Heart right ventricle (tissue), 16 donors: ENCODE measurements at regions of chr10 and their contacts with region 1.

Region 1: GRCh38 chr10:111076191-111076681 is 593 bp upstream of the ADRA2A start:
- DNase-seq: peak; percentile 31 to 59
- ATAC-seq: peak; percentile 67 to 93 (median 85)
- H3K4me3 ChIP-seq: peak overlapping the region; percentile 35 to 62 (median 54)
- H3K27ac ChIP-seq: no peak overlapping the region
- H3K4me1 ChIP-seq: peaks cover 0 to 37% (median 31%) of the 10 kb centered on the region in 9 donors
- H3K27me3 ChIP-seq: peaks cover 14 to 92% (median 84%) of the 10 kb centered on the region in 7 donors
- CTCF ChIP-seq: peak; percentile 61 to 85 (median 80)

Region 2: GRCh38 chr10:110967645-110968044 is 108.6 kb before region 1 on chr10:
- intact Hi-C with region 1: no loop called
- DNase-seq: no peak
- ATAC-seq: no peak
- H3K4me3 ChIP-seq: no peak overlapping the region
- H3K27ac ChIP-seq: no peak overlapping the region
- H3K4me1 ChIP-seq: peaks cover 0 to 46% (median 25%) of the 10 kb centered on the region in 9 donors
- H3K27me3 ChIP-seq: no peaks in the 10 kb centered on the region
- CTCF ChIP-seq: no peak

Region 3: GRCh38 chr10:111207500-111207899 is 131.3 kb after region 1 on chr10:
- intact Hi-C with region 1: loop called in 1 of 10 experiments (anchors 2 kb)
- DNase-seq: no peak
- ATAC-seq: no peak
- H3K4me3 ChIP-seq: no peak overlapping the region
- H3K27ac ChIP-seq: no peak overlapping the region
- H3K4me1 ChIP-seq: no peaks in the 10 kb centered on the region
- H3K27me3 ChIP-seq: peaks cover 0 to 11% (median 3%) of the 10 kb centered on the region in 7 donors
- CTCF ChIP-seq: peak in 6 of 9 donors; percentile 15 to 40 (median 22)

Region 4: GRCh38 chr10:111360260-111360925 is 284.2 kb after region 1 on chr10:
- intact Hi-C with region 1: loop called in 3 of 10 experiments (anchors 5 to 10 kb)
- DNase-seq: peak in 1 of 2 donors; percentile 10
- ATAC-seq: peak; percentile 49 to 93 (median 86)
- H3K4me3 ChIP-seq: no peak overlapping the region
- H3K27ac ChIP-seq: no peak overlapping the region
- H3K4me1 ChIP-seq: no peaks in the 10 kb centered on the region
- H3K27me3 ChIP-seq: peaks cover 0 to 24% (median 5%) of the 10 kb centered on the region in 7 donors
- CTCF ChIP-seq: peak in 8 of 9 donors; percentile 20 to 63 (median 52)

Region 5: DNA sequence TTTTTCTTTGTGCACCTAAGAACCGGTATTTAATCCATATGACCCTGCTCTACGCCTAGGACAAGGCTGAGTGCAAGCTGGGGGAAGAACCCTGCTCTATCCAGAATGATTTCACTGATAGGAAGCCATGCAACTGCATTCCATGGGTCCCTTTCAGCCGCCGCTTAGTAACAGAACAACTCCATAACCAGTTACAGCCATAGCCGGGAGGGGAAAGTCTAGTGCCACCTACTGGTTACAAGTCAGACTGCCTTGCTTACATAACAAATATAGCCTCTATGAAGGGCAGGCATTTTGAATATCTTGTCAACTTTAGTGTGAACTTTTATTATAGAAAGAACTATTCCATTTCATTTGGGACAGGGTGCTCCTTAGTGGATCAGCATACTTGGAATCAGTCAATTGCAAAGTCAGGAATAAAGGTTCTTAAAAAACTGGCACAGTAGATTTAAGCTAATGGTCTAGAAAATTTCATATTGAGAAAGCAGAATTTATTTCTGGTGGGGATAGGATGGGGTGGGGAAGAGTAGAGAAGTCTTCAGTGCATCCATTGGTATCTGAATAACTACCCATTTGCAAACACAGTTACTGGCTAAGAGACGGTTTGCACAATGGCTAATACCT is 522.3 kb after region 1 on chr10:
- intact Hi-C with region 1: loop called in 5 of 10 experiments (anchors 2 to 10 kb)
- DNase-seq: peak in 1 of 2 donors; percentile 49
- ATAC-seq: peak in 6 of 8 donors; percentile 47 to 85 (median 68)
- H3K4me3 ChIP-seq: no peak overlapping the region
- H3K27ac ChIP-seq: no peak overlapping the region
- H3K4me1 ChIP-seq: peaks cover 0 to 5% (median 0%) of the 10 kb centered on the region in 9 donors
- H3K27me3 ChIP-seq: no peaks in the 10 kb centered on the region
- CTCF ChIP-seq: peak; percentile 50 to 81 (median 77)

Region 6: GRCh38 chr10:112140110-112140970 is 1064.1 kb after region 1 on chr10:
- intact Hi-C with region 1: loop called in 1 of 10 experiments (anchors 10 kb)
- DNase-seq: peak; percentile 44 to 45
- ATAC-seq: peak in 7 of 8 donors; percentile 35 to 80 (median 64)
- H3K4me3 ChIP-seq: no peak overlapping the region
- H3K27ac ChIP-seq: no peak overlapping the region
- H3K4me1 ChIP-seq: peaks cover 0 to 4% (median 0%) of the 10 kb centered on the region in 9 donors
- H3K27me3 ChIP-seq: no peaks in the 10 kb centered on the region
- CTCF ChIP-seq: peak; percentile 54 to 86 (median 77)